GM13976 (cell line): ENCODE measurements at regions of chr20 and their contacts with region 1.

Region 1: DNA sequence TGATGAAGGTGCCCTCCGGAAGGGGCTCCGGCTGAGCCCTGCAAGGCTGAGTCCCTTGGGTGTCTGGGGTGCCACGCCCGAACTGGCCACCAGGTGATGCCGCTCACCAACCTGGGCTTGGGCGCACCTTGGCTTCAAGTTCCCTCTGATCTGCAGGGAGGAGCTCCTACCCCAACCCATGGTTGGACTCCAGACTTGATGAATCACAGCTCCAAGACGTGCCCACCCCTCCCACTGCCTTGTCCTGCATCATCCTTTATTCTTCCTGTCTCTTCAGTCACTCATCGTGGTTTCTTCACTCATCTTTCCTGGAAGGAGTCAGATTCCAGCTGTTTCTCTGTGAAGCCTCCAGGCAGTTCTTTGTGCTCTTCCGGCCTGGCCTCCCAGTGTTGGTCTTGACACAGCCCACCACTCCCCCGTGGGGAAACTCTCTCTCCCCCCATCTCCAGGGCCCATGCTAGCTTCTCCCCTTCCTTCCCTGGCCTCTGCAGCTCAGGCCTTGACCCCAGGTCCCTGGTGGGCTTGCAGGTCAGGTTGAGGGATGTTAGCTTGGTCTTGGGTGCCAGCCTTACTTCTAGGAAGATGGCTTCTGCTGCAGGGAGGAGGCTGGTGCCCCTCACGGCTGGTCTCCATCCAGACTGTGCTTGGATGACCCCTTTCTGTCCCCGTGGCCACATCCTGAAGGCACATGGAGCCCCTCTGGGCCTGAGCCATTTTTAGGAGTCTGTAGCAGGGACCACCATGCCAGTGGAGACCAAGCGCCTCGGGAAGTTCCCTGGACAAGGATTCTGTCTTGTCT is 2.6 kb upstream of the ZBP1 start:
- DNase-seq: peak; percentile 62
- CTCF ChIP-seq: peak; percentile 69

Region 2: DNA sequence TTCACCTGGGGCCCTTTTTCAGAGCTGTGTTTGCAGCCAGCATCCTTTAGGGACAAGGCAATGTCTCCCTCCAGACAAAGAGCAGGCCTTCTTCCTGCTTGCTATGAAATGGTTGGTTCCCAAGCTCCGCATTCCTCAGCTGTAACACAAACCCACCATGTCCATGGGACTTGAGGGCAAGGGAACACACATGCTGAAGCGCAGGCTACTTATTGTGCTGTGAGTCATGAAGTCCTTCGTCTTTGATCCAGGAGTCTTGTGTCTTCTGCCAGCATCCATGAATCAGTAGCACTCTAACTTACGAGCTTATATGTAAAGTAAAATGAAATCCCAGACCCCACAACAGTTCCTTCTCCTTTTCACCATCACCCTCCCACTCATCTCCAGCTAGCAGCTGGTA is 546.7 kb after region 1 on chr20:
- in situ Hi-C with region 1: no loop called
- DNase-seq: no peak
- CTCF ChIP-seq: no peak

Region 3: DNA sequence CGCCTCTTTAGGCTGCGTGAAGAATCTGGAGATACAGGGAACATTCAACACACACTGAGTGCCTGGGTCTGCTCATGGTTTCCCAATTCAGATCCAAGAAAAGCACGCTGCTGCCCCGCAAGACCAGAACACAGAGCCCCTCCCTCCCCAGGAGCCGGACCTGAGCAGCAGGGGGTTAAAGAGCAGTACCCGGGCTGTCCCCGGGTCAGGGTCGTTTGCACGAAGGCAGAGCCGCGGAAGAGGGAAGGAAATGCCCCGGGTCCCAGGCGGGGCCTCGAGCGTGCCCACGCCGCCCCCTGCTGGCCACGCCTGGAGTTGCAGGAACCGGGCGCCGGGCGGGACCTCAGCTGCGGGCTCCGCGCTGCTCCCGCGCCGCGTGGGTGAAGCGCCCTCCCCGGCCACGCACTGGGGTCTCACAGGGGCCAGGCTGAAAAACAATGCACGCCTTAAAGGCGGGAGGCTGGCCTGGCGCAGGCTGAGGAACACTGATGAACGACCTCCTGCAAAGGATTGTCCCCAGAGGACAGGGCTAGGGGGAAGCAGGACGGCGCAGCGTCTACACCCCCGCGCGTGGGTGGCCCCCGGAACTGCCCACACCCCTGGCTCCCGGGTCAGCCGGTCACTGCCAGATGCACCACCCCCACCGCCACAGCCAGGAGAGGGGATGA is 556.8 kb after region 1 on chr20:
- in situ Hi-C with region 1: loop called (anchors 25 kb)
- DNase-seq: peak; percentile 88
- CTCF ChIP-seq: peak; percentile 93